ENCODE measurements at regions of chr4 and their contacts with region 1.

Region 1: DNA sequence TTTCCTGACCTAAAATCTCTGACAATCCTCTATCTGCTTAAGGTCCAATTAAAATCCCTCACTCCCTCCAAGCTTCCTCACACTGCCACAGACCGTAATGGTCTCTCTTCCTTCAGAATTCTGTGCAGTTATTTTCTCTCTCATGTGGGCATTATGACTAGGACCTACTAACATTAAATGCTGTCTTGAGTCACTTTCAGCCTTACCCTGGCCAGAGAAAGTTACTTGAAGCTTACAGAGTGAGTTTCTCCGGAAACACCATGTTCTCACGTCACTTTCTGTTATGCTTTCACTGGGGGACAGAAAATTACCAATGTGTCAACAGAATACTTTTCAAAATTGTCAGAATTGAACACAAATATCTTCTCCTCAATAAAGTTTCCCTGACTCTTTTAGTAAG is 271.8 kb downstream of the INPP4B start:
- DNase-seq: no peak
- ATAC-seq: no peak
- H3K4me3 ChIP-seq: no peak overlapping the region
- H3K4me3 Mint-ChIP-seq: peak overlapping the region in 5 of 10 donors; percentile 2 to 64 (median 38)
- H3K27ac ChIP-seq: no peak overlapping the region
- H3K27ac Mint-ChIP-seq: peak overlapping the region in 6 of 9 donors; percentile 17 to 81 (median 44)
- H3K4me1 ChIP-seq: peaks cover 0 to 29% of the 10 kb centered on the region in 2 donors
- H3K4me1 Mint-ChIP-seq: peaks cover 19 to 93% (median 77%) of the 10 kb centered on the region in 7 donors
- H3K27me3 ChIP-seq: no peaks in the 10 kb centered on the region
- H3K27me3 Mint-ChIP-seq: no peaks in the 10 kb centered on the region

Region 2: DNA sequence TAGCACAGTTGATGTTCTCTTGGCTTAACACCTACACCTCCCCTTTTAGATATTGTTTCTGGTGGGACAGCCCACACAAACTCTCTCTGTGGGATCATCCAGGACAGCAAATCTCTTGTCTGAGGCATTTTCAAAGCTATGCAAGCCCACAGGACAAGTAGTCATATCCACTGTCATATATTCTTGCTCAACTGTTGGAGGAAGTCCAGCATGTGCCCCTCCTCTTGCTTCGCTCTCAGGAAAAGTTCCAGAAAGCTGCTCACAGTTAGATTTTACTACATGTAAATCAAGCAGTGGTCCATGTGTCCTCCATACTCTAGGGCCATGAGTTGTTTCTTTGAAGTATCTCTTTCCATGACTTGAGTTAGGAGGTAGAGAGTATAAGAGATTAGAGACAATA is 11.1 kb after region 1 on chr4:
- CTCF ChIA-PET with region 1: interaction called, 3 read pairs
- POLR2A ChIA-PET with region 1: interaction called, 3 read pairs
- intact Hi-C with region 1: loop called in 1 of 2 experiments (anchors 1 kb)
- DNase-seq: no peak
- ATAC-seq: no peak
- H3K4me3 ChIP-seq: no peak overlapping the region
- H3K4me3 Mint-ChIP-seq: peak overlapping the region in 1 of 10 donors; percentile 24
- H3K27ac ChIP-seq: no peak overlapping the region
- H3K27ac Mint-ChIP-seq: peak overlapping the region in 1 of 9 donors; percentile 23
- H3K4me1 ChIP-seq: peaks cover 0 to 3% of the 10 kb centered on the region in 2 donors
- H3K4me1 Mint-ChIP-seq: peaks cover 10 to 58% (median 38%) of the 10 kb centered on the region in 7 donors
- H3K27me3 ChIP-seq: no peaks in the 10 kb centered on the region
- H3K27me3 Mint-ChIP-seq: no peaks in the 10 kb centered on the region

Region 3: DNA sequence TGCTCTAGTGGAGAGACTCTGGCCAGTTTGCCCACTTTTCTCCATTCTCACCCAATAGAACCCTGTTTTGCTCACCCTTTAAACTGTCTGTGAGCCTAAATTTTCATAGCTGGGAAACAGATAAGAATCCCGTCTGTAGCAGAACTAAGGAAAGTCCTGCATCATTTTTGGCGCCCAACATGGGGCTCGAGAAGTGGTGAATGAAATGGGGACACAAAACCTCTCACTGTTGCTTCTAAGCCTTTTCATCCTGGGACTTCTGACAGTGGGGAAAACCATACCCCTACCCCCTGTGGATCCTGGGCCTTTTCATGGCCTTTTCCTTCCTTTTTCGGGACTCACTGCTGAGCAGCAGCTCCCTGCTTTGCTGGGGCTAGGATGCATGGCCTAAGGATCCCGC is 81.9 kb after region 1 on chr4:
- CTCF ChIA-PET with region 1: no interaction called
- POLR2A ChIA-PET with region 1: no interaction called
- intact Hi-C with region 1: no loop called
- DNase-seq: peak in 6 of 9 donors; percentile 6 to 40 (median 30)
- ATAC-seq: no peak
- H3K4me3 ChIP-seq: no peak overlapping the region
- H3K4me3 Mint-ChIP-seq: no peak overlapping the region
- H3K27ac ChIP-seq: no peak overlapping the region
- H3K27ac Mint-ChIP-seq: no peak overlapping the region
- H3K4me1 ChIP-seq: no peaks in the 10 kb centered on the region
- H3K4me1 Mint-ChIP-seq: no peaks in the 10 kb centered on the region
- H3K27me3 ChIP-seq: no peaks in the 10 kb centered on the region
- H3K27me3 Mint-ChIP-seq: no peaks in the 10 kb centered on the region

Measured in naive thymus-derived CD4-positive, alpha-beta T cell (primary cell).